ENCODE measurements at regions of chr9 and their contacts with region 1.

Region 1: GRCh38 chr9:27094640-27095298 is 14.3 kb upstream of the TEK start:
- DNase-seq: no peak
- ATAC-seq: peak in 1 of 4 donors; percentile 33
- H3K4me3 ChIP-seq: no peak overlapping the region
- H3K27ac ChIP-seq: no peak overlapping the region
- H3K4me1 ChIP-seq: no peaks in the 10 kb centered on the region
- H3K27me3 ChIP-seq: no peaks in the 10 kb centered on the region
- CTCF ChIP-seq: no peak

Region 2: GRCh38 chr9:27699621-27700020 is 604.9 kb after region 1 on chr9:
- intact Hi-C with region 1: loop called in 1 of 2 experiments (anchors 10 kb)
- DNase-seq: no peak
- ATAC-seq: no peak
- H3K4me3 ChIP-seq: no peak overlapping the region
- H3K27ac ChIP-seq: no peak overlapping the region
- H3K4me1 ChIP-seq: no peaks in the 10 kb centered on the region
- H3K27me3 ChIP-seq: no peaks in the 10 kb centered on the region
- CTCF ChIP-seq: no peak